ENCODE measurements at regions of chr12 and their contacts with region 1.

Region 1: DNA sequence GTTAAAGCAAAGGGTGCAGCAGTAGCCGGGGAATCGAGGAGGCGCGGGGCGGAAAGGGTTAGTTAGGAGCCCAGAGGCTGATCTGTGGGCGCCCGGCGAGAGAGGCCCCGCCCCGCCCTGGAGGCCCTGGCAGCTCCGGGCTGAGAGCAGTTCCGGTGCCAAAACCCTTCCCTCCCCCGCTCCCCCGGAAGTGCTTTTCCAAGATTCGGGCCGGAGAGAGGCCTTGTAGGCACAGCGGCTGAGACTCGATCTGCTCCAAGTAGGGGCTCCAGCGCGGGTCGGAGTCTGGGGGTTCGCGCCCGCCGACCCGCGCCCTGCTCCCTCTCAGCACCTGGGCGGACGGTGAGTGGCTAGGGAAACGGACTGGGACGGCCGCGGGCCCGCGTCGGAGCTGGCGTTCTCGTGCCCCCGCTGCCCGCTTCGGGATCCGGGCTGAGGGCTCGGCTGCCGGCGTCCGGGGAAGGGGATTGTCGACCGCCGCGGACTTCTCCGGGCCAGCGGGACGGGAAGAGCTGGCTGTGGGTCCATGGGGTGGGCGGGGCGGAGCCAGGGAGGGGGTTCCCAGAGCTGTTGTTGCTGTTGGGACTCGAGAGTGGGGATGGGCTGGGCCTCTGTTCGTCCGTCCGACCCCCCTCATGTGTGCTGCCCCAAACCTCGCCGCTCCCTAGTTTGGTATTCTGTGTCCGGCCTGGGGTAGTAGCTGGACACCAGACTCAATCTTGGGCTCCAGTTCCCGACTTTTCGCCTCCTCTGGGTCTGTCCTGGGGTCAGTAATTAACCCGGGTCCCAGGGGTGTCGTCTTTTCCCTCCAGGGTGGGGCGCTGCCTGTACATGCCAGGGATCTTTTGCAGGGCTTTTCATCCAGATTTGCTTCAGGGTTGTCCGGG is at the start of gene FRS2:
- DNase-seq: peak; percentile 95
- H3K4me3 Mint-ChIP-seq: peak within 1 kb of the TSS; percentile 95
- H3K27ac Mint-ChIP-seq: peak within 1 kb of the TSS; percentile 81
- H3K4me1 Mint-ChIP-seq: peaks cover 62% of the 10 kb centered on the region
- H3K27me3 Mint-ChIP-seq: no peaks in the 10 kb centered on the region
- CTCF ChIP-seq: peak; percentile 34
- total RNA-seq, gene FRS2: 27.5 and 34.5 TPM in 2 replicates

Region 2: DNA sequence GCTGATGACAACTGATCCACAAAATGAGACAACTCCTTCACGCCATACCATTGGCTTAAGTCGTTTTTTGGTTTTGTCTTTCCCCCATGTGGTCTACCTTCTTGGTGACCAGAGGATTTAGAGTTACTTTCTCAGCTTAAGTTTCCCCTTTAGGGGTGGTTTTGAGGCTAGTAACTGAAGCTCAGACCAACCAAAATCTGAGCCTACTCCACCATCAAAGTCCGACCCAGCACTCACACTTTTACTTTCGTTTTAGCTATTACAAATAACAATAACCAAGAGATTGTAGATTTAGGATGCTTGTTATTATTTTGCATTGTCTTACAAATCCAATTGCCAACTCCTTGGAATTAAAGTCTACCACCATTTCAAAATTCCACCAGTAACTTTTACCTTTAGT is 1007.6 kb before region 1 on chr12:
- CTCF ChIA-PET with region 1: no interaction called
- intact Hi-C with region 1: no loop called
- DNase-seq: no peak
- H3K4me3 Mint-ChIP-seq: peak overlapping the region; percentile 40
- H3K27ac Mint-ChIP-seq: no peak overlapping the region
- H3K4me1 Mint-ChIP-seq: no peaks in the 10 kb centered on the region
- H3K27me3 Mint-ChIP-seq: peaks cover 6% of the 10 kb centered on the region
- CTCF ChIP-seq: no peak

Region 3: GRCh38 chr12:68565375-68565903 is 905.0 kb before region 1 on chr12:
- CTCF ChIA-PET with region 1: no interaction called
- intact Hi-C with region 1: no loop called
- DNase-seq: peak; percentile 10
- H3K4me3 Mint-ChIP-seq: no peak overlapping the region
- H3K27ac Mint-ChIP-seq: no peak overlapping the region
- H3K4me1 Mint-ChIP-seq: peaks cover 9% of the 10 kb centered on the region
- H3K27me3 Mint-ChIP-seq: no peaks in the 10 kb centered on the region
- CTCF ChIP-seq: no peak

Region 4: DNA sequence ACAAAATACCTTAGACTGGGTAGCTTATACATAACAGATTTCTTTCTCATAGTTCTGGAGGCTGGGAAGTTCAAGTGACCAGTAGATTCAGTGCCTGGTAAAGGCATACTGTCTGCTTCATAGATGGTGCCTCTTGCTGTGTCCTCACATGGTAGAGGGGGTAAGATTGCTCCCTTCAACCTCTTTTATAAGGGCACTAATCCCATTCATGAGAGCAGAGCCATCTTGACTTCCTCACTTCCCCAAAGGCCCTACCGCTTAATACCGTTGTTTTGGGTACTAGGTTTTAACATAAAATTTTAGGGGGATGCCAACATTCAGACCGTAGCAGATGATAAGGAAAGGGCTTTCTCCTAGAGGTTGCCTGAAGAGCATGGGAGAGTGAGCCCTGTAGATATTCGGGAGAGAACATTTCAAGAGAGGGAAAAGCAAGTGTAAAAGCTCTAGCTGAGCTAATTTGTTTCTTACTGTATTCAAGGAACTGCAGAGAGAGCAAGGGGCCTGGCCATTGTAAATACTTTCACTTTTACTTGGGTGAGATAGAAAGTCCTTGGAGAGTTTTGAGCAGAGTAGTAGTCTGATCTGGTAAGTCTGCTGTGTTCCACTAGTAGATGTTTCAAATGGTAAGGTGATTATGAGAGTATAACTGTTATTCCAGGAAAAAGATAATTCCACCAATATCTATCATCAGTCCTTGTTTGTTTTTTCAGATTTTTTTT is 27.0 kb after region 1 on chr12:
- CTCF ChIA-PET with region 1: no interaction called
- intact Hi-C with region 1: no loop called
- DNase-seq: no peak
- H3K4me3 Mint-ChIP-seq: no peak overlapping the region
- H3K27ac Mint-ChIP-seq: no peak overlapping the region
- H3K4me1 Mint-ChIP-seq: peaks cover 44% of the 10 kb centered on the region
- H3K27me3 Mint-ChIP-seq: no peaks in the 10 kb centered on the region
- CTCF ChIP-seq: no peak

Region 5: DNA sequence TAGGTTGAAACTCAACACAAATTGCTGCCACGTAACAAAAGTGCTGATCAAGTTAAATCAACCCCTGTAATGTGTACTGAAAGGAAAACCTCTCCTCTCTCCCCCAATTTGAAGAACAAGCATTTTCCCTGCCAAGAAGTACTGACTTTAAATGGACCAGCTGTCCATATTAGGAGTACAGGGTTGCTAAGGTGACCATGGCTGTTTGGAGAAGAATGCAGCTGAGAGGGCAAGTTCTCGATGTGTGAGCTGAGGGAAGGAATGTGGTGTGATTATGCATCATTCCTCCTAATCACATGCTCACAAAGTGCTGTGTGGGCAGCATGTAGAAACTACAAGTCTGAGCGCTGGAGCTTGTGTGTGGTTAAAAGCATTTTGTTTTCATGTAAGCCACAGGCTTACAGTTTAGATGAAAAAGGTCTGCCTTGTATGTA is 64.0 kb after region 1 on chr12:
- CTCF ChIA-PET with region 1: no interaction called
- intact Hi-C with region 1: loop called (anchors 5 kb)
- DNase-seq: peak; percentile 67
- H3K4me3 Mint-ChIP-seq: no peak overlapping the region
- H3K27ac Mint-ChIP-seq: peak overlapping the region; percentile 70
- H3K4me1 Mint-ChIP-seq: peaks cover 12% of the 10 kb centered on the region
- H3K27me3 Mint-ChIP-seq: no peaks in the 10 kb centered on the region
- CTCF ChIP-seq: no peak

Region 6: GRCh38 chr12:69553627-69554248 is 83.3 kb after region 1 on chr12:
- CTCF ChIA-PET with region 1: no interaction called
- intact Hi-C with region 1: loop called (anchors 5 kb)
- DNase-seq: peak; percentile 51
- H3K4me3 Mint-ChIP-seq: no peak overlapping the region
- H3K27ac Mint-ChIP-seq: no peak overlapping the region
- H3K4me1 Mint-ChIP-seq: peaks cover 9% of the 10 kb centered on the region
- H3K27me3 Mint-ChIP-seq: no peaks in the 10 kb centered on the region
- CTCF ChIP-seq: no peak